ENCODE measurements at regions of chr7 and their contacts with region 1.

Region 1: DNA sequence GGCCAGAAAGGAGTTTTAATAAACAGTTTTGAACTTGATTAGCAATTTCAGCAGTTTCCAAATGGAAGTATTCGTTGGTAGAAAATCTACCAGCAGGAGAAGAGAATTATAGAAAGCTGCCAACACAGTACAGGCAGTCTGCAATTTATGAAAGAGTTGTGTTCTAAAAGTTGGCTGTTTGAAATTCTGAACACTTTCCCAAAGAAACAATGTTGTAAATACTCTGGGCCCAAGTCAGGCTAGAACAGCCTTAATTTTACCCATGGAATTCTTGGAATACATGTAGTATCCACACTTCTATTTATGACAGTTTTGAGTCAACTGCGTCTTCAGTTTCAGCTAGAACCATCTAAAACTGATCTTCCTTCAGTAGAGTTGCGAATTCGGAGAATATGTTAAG is 42.5 kb downstream of the AVL9 start:
- DNase-seq: no peak
- H3K4me3 ChIP-seq: no peak overlapping the region
- H3K27ac ChIP-seq: no peak overlapping the region
- H3K4me1 ChIP-seq: peaks cover 0 to 38% (median 19%) of the 10 kb centered on the region in 4 donors
- H3K27me3 ChIP-seq: no peaks in the 10 kb centered on the region
- CTCF ChIP-seq: no peak

Region 2: DNA sequence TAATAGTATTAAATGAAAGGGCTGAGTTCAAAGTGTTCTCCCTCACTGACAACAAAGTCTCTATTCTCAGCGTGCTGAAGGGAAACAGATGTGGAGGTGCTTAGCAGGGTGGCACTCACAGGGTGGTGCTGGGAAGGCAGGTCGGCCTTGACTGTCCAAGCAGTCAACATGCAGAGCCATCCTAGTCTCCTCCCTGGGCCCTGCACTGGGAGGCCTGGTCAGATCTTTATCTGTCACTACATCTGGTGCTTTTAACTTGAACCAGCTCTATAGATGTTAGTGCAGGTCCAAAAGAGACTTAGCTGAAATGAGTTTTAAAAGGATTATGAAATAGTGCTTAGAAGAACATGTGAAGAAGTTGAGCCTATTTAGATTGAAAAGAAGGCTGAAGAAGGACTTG is 39.7 kb after region 1 on chr7:
- intact Hi-C with region 1: loop called (anchors 1 kb)
- DNase-seq: no peak
- H3K4me3 ChIP-seq: no peak overlapping the region
- H3K27ac ChIP-seq: no peak overlapping the region
- H3K4me1 ChIP-seq: no peaks in the 10 kb centered on the region
- H3K27me3 ChIP-seq: no peaks in the 10 kb centered on the region
- CTCF ChIP-seq: no peak